B cell (primary cell): ENCODE measurements at regions of chr9 and their contacts with region 1.

Region 1: DNA sequence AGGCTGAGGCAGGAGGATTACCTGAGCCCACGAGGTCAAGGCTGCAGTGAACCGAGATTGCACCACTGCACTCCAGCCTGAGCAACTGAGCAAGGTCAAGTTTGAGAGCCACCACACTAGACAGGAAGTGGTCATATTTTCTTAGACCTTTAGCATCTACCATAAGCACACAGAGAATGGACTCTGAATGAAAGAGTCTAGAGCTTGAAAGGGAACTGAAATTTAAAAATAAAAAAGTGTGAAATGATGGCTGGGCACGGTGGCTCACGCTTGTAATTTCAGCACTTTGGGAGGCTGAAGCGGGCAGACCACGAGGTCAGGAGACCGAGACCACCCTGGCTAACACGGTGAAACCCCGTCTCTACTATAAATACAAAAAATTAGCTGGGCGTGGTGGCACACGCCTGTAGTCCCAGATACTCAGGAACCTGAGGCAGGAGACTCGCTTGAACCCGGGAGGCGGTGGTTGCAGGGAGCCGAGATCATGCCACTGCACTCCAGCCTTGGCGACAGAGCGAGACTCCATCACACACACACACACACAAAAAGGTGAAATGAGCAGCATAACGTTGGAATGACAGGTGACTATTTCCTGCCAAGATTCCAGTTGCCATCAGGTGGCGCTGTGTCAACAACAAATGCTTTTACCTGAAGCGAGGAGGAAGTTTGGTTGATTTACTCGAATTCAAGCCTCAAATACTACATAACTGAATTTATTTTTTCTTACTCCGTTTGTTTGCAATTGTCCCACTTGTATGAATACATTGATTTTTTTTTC is 21.3 kb upstream of the AK3 start:
- DNase-seq: peak; percentile 87
- ATAC-seq: peak; percentile 73
- H3K4me3 ChIP-seq: peak overlapping the region; percentile 22 to 62 (median 56)
- H3K4me3 Mint-ChIP-seq: peak overlapping the region; percentile 82
- H3K27ac ChIP-seq: peak overlapping the region in 1 of 2 donors; percentile 28
- H3K27ac Mint-ChIP-seq: peak overlapping the region; percentile 17
- H3K4me1 ChIP-seq: peaks cover 10 to 20% of the 10 kb centered on the region in 2 donors
- H3K4me1 Mint-ChIP-seq: peaks cover 22% of the 10 kb centered on the region
- H3K27me3 ChIP-seq: no peaks in the 10 kb centered on the region
- H3K27me3 Mint-ChIP-seq: no peaks in the 10 kb centered on the region
- CTCF ChIP-seq: peak; percentile 89

Region 2: GRCh38 chr9:4740638-4741364 is 21.5 kb before region 1 on chr9 and contains the start of gene AK3:
- CTCF ChIA-PET with region 1: interaction called, 22 read pairs
- POLR2A ChIA-PET with region 1: no interaction called
- intact Hi-C with region 1: loop called (anchors 2 kb)
- DNase-seq: peak; percentile 92
- ATAC-seq: peak; percentile 92
- H3K4me3 ChIP-seq: peak within 1 kb of the TSS; percentile 73 to 90 (median 85)
- H3K4me3 Mint-ChIP-seq: peak within 1 kb of the TSS; percentile 89
- H3K27ac ChIP-seq: peak within 1 kb of the TSS; percentile 51 to 83
- H3K27ac Mint-ChIP-seq: peak within 1 kb of the TSS; percentile 90
- H3K4me1 ChIP-seq: peaks cover 19 to 23% of the 10 kb centered on the region in 2 donors
- H3K4me1 Mint-ChIP-seq: peaks cover 27% of the 10 kb centered on the region
- H3K27me3 ChIP-seq: no peaks in the 10 kb centered on the region
- H3K27me3 Mint-ChIP-seq: no peaks in the 10 kb centered on the region
- CTCF ChIP-seq: no peak
- total RNA-seq, gene AK3: 20.4 and 22.9 TPM in 2 replicates

Region 3: DNA sequence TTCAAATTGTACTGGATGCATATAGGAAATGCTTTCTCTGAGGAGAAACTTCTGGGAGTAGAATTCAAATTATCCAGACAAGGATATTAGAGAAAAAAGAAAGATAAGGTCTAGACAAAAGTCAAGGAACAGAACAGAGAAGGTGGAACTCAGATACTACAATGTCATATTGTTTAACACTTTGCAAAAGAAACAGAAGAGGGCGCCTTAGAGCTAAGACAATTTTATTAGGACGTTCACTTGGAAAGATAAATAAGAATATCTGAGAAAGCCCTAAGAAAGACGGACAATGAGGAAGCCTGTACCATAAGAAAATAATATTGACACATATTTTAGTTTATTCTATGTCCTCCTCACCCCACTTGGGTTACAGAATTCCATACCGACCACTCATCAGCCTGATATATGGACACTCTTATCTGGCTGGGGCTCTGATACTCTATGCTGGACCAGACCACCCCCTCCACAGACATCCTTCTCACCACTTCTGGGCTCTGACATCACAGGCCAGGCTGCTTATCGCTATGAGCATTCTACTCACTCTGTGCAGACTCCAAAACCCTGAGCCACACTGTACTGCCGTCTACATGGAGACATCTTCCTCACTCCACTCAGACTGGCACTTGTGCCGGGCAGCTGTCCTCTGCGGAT is 12.1 kb before region 1 on chr9:
- CTCF ChIA-PET with region 1: interaction called, 22 read pairs
- POLR2A ChIA-PET with region 1: no interaction called
- intact Hi-C with region 1: no loop called
- DNase-seq: peak; percentile 59
- ATAC-seq: peak; percentile 33
- H3K4me3 ChIP-seq: no peak overlapping the region
- H3K4me3 Mint-ChIP-seq: no peak overlapping the region
- H3K27ac ChIP-seq: no peak overlapping the region
- H3K27ac Mint-ChIP-seq: no peak overlapping the region
- H3K4me1 ChIP-seq: no peaks in the 10 kb centered on the region
- H3K4me1 Mint-ChIP-seq: no peaks in the 10 kb centered on the region
- H3K27me3 ChIP-seq: no peaks in the 10 kb centered on the region
- H3K27me3 Mint-ChIP-seq: no peaks in the 10 kb centered on the region
- CTCF ChIP-seq: peak; percentile 77

Region 4: GRCh38 chr9:4873066-4873465 is 110.8 kb after region 1 on chr9:
- CTCF ChIA-PET with region 1: no interaction called
- POLR2A ChIA-PET with region 1: no interaction called
- intact Hi-C with region 1: no loop called
- DNase-seq: no peak
- ATAC-seq: no peak
- H3K4me3 ChIP-seq: no peak overlapping the region
- H3K4me3 Mint-ChIP-seq: no peak overlapping the region
- H3K27ac ChIP-seq: no peak overlapping the region
- H3K27ac Mint-ChIP-seq: no peak overlapping the region
- H3K4me1 ChIP-seq: no peaks in the 10 kb centered on the region
- H3K4me1 Mint-ChIP-seq: no peaks in the 10 kb centered on the region
- H3K27me3 ChIP-seq: no peaks in the 10 kb centered on the region
- H3K27me3 Mint-ChIP-seq: no peaks in the 10 kb centered on the region
- CTCF ChIP-seq: no peak

Region 5: DNA sequence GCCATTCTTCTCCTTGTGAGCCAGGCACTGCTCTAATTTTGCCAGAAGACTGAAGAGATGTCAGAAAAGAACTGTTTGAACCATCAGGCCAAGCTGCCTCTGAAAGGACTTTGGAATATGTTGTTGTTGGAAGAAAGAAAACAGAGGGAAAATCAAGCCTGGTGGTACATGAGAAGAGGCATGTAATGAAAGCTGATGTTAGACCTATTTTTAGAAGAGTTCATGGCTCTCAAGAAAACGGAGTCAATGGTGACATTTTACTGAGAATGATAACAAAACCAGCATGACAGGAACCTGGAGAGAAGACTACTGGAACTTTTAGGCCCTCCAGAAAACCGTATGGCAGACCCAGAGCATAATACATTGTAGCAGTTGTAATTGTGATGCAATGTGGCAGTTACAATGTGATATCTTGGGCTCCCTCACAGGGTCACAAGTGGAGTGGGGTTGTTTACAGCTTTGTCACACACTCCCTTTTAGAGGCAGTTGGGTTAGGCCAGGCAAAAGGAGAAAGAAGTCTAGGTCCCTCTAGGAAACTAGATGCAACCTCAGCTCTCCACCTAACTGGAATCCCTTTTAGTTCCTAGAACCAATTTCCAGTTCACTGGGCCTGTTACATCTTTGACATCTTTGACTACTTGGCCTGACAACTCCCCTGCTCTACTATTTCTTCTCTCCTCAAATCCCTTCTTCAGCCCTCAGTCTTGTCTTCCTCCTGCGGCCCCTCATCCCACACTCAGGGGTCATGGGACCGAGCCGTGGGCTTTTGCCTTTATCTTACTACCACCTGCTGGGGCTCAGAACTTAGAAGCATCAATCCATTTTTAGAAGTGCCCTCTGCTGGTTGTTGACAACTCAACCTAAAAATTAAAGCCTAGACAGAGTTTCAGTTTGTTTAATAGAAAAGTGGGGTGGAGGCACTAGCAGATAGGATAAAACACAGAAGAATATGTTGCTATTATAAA is 161.6 kb after region 1 on chr9:
- CTCF ChIA-PET with region 1: interaction called, 61 read pairs
- POLR2A ChIA-PET with region 1: no interaction called
- intact Hi-C with region 1: loop called (anchors 1 kb)
- DNase-seq: peak; percentile 63
- ATAC-seq: peak; percentile 60
- H3K4me3 ChIP-seq: no peak overlapping the region
- H3K4me3 Mint-ChIP-seq: no peak overlapping the region
- H3K27ac ChIP-seq: no peak overlapping the region
- H3K27ac Mint-ChIP-seq: no peak overlapping the region
- H3K4me1 ChIP-seq: peaks cover 6 to 8% of the 10 kb centered on the region in 2 donors
- H3K4me1 Mint-ChIP-seq: peaks cover 9% of the 10 kb centered on the region
- H3K27me3 ChIP-seq: no peaks in the 10 kb centered on the region
- H3K27me3 Mint-ChIP-seq: no peaks in the 10 kb centered on the region
- CTCF ChIP-seq: peak; percentile 42

Region 6: DNA sequence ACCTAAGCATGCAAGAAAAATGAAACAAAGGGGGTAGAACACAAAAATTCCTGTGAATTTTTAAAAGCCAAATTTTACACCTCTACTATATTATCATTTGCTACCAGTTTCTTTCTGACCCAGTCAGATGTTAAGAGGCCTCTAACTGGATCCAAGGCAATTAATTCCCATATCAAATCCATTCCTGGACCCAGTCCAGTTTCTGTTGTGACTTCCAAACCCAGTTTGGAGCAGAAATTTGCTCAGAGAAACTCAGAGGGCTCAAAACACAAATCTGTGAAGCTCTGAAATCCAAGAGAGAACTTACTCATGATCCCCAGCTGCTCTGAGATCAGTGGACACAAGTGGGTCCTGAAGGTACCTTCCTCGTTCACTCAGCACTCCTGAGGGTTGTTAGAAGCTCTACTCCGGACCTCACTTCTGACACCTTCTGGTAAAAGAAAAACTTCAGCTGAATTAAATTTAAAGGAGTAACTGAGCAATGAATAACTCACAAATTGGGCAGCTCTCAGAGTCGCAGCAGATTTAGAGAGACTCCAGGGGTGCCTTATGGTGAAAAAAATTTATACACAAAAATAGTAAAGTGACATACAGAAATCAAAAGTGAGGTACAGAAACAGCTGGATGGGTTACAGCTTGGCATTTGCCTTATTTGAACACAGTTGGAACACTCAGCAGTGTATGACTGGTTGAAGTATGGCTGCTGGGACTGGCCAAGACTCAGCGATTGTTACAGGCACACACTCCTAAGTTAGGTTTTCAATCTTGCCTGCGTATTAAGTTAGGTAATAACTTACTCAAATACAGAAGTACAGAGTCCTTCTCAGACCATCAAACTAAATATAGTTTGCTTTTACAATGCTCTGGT is 501.3 kb after region 1 on chr9:
- CTCF ChIA-PET with region 1: interaction called, 3 read pairs
- POLR2A ChIA-PET with region 1: no interaction called
- intact Hi-C with region 1: loop called (anchors 2 kb)
- DNase-seq: peak; percentile 15
- ATAC-seq: no peak
- H3K4me3 ChIP-seq: no peak overlapping the region
- H3K4me3 Mint-ChIP-seq: no peak overlapping the region
- H3K27ac ChIP-seq: no peak overlapping the region
- H3K27ac Mint-ChIP-seq: no peak overlapping the region
- H3K4me1 ChIP-seq: no peaks in the 10 kb centered on the region
- H3K4me1 Mint-ChIP-seq: no peaks in the 10 kb centered on the region
- H3K27me3 ChIP-seq: no peaks in the 10 kb centered on the region
- H3K27me3 Mint-ChIP-seq: no peaks in the 10 kb centered on the region
- CTCF ChIP-seq: no peak

Region 7: DNA sequence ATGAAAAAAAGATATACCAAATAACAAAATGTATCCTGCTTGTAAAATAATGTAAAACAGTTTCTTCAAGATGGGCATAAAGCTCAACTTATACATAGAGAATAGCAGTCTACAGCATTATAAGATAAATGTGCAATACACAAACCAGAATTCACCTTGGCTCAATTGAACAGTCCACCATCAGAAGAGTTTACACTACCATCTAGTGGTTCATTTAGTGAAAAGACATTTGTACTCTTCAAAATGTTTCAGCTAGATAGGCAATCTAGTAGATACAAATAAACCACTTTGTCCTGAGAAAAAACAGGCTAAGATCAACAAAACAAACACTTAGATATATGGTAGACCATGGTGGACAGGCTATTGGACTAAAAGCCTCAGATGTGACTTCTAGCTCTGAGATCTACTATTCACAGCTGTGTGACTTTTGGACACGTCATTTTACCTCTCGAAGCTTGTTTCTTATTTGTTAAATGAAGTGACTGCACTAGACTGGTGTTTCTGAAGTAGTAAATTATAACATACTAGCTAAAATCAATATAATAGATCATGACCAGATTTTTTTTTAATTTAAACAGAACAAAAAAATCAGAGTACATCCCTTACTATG is 1543.8 kb after region 1 on chr9:
- CTCF ChIA-PET with region 1: interaction called, 3 read pairs
- POLR2A ChIA-PET with region 1: no interaction called
- intact Hi-C with region 1: loop called (anchors 5 kb)
- DNase-seq: peak; percentile 25
- ATAC-seq: no peak
- H3K4me3 ChIP-seq: no peak overlapping the region
- H3K4me3 Mint-ChIP-seq: no peak overlapping the region
- H3K27ac ChIP-seq: no peak overlapping the region
- H3K27ac Mint-ChIP-seq: no peak overlapping the region
- H3K4me1 ChIP-seq: no peaks in the 10 kb centered on the region
- H3K4me1 Mint-ChIP-seq: no peaks in the 10 kb centered on the region
- H3K27me3 ChIP-seq: peaks cover 0 to 5% (median 4%) of the 10 kb centered on the region in 4 experiments
- H3K27me3 Mint-ChIP-seq: peaks cover 15% of the 10 kb centered on the region
- CTCF ChIP-seq: peak; percentile 57